Activated CD8-positive, alpha-beta T cell treated with anti-CD3 and anti-CD28 coated beads for 36 hours (primary cell): ENCODE measurements at regions of chr13 and their contacts with region 1.

Region 1: DNA sequence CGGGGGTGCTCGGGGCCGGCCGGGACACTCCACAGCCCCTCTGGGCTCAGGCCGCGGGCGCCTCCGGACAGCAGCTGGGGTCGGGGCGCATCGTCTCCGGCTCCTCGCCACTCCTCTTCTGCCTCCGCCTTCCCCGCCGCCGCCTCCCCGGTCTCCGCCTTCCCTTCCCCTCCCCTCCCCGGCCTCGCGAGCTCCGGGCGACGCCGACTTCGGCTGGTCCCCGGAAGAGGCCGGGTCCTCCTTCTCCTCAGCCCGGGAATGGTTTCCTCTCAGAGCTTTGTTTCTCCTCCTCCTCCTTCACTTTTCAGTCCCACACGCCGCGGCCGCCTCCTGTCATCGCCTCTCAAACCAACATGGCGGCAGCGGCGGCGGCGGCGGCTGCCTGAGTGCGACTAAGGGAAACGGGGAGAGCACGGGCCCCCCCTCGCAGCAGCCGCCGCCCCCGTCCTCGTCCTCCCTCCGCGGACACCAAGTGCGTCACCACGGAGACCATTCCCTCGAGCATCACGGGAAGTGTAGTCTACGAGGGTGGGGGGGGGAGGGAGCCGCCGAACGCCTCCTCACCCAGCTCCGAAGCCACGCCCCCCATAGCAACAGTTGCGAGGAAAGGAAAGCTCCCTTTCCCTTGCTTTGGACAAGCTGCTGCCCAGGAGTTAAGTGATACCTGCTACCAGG is at the start of gene UBL3:
- DNase-seq: peak; percentile 96
- ATAC-seq: peak; percentile 91
- H3K4me3 Mint-ChIP-seq: peak within 1 kb of the TSS; percentile 92
- H3K27ac Mint-ChIP-seq: peak within 1 kb of the TSS; percentile 99
- H3K4me1 Mint-ChIP-seq: peaks cover 38% of the 10 kb centered on the region
- H3K27me3 Mint-ChIP-seq: no peaks in the 10 kb centered on the region
- CTCF ChIP-seq: no peak
- total RNA-seq, gene UBL3: 7.2 to 8.1 TPM

Region 2: GRCh38 chr13:29595380-29596063 is 254.8 kb before region 1 on chr13 and contains the start of gene SLC7A1:
- CTCF ChIA-PET with region 1: no interaction called
- POLR2A ChIA-PET with region 1: no interaction called
- intact Hi-C with region 1: loop called (anchors 5 kb)
- DNase-seq: peak; percentile 88
- ATAC-seq: peak; percentile 87
- H3K4me3 Mint-ChIP-seq: peak within 1 kb of the TSS; percentile 92
- H3K27ac Mint-ChIP-seq: peak within 1 kb of the TSS; percentile 97
- H3K4me1 Mint-ChIP-seq: peaks cover 37% of the 10 kb centered on the region
- H3K27me3 Mint-ChIP-seq: peaks cover 1% of the 10 kb centered on the region
- CTCF ChIP-seq: no peak
- total RNA-seq, gene SLC7A1: 119 to 124 TPM

Region 3: DNA sequence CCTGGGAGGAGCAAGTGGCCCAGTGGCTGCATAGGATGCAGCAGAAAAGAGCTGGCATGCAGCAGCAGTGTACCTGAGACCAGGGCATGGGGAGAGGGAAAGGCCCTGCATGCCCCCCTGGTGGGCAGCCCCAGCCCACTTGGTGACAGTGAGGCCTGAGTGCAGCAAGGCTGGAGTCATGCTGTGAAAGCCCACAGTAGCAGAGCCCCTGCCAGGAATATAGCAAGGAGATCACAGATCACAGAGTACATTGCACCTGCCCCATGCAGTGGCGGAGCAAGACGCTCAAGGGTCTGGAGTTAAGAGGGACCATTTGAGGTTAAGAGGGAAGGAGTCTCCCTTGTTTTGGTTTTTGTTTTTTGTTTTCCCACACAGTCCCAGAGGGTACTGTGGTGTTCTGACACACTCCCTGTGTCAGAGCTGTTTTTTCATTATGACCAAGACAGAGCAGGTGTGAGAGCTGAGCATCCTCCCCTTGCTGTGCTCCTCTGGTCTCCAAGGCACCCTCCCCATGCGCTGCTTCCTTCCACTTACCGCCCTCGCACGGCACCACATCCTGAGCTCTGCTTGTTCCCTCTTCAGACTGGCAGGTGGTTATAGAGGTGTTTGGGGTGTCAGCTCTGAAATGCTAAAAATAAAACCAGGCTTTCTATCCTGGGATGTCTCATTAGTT is 85.1 kb after region 1 on chr13:
- CTCF ChIA-PET with region 1: interaction called, 8 read pairs
- POLR2A ChIA-PET with region 1: interaction called, 5 read pairs
- intact Hi-C with region 1: loop called (anchors 5 kb)
- DNase-seq: peak; percentile 93
- ATAC-seq: peak; percentile 95
- H3K4me3 Mint-ChIP-seq: peak overlapping the region; percentile 67
- H3K27ac Mint-ChIP-seq: peak overlapping the region; percentile 81
- H3K4me1 Mint-ChIP-seq: peaks cover 40% of the 10 kb centered on the region
- H3K27me3 Mint-ChIP-seq: no peaks in the 10 kb centered on the region
- CTCF ChIP-seq: no peak

Region 4: GRCh38 chr13:29991343-29991742 is 141.0 kb after region 1 on chr13:
- CTCF ChIA-PET with region 1: no interaction called
- POLR2A ChIA-PET with region 1: no interaction called
- intact Hi-C with region 1: no loop called
- DNase-seq: no peak
- ATAC-seq: no peak
- H3K4me3 Mint-ChIP-seq: no peak overlapping the region
- H3K27ac Mint-ChIP-seq: no peak overlapping the region
- H3K4me1 Mint-ChIP-seq: no peaks in the 10 kb centered on the region
- H3K27me3 Mint-ChIP-seq: peaks cover 1% of the 10 kb centered on the region
- CTCF ChIP-seq: no peak